ENCODE measurements at regions of chr9 and their contacts with region 1.

Region 1: DNA sequence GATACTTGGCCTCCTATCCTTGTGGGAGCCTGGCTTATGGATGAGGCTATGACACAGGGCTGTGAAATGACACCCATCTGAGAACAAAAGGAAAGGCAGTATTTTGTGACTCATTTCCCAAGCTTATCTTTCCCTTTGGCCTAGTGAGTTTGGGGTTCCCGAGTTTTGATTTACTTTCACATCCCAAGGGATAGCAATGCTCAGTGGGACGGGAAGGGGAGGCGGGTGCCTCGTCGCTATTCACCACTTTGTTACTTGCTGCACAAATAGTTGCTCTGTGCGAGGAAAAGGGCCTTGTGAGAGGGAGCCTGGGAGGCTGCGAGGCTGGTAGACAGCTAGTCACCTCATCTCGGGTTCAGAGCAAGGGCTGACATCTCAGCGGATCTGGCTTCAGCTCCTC is 59.1 kb upstream of the ENTREP1 start:
- DNase-seq: no peak
- ATAC-seq: no peak
- H3K4me3 ChIP-seq: no peak overlapping the region
- H3K27ac ChIP-seq: no peak overlapping the region
- H3K4me1 ChIP-seq: no peaks in the 10 kb centered on the region
- H3K27me3 ChIP-seq: no peaks in the 10 kb centered on the region; a peak in 1 of 4 replicates
- CTCF ChIP-seq: no peak
- EP300 ChIP-seq: no peak
- POLR2A ChIP-seq: no peak
- RAD21 ChIP-seq: no peak

Region 2: GRCh38 chr9:69215774-69216485 is 50.0 kb before region 1 on chr9:
- CTCF ChIA-PET with region 1: no interaction called
- POLR2A ChIA-PET with region 1: no interaction called
- RAD21 ChIA-PET with region 1: no interaction called
- SMC1A ChIA-PET with region 1: no interaction called
- in situ Hi-C with region 1: loop called (anchors 5 kb)
- intact Hi-C with region 1: no loop called
- DNase-seq: no peak
- ATAC-seq: no peak
- H3K4me3 ChIP-seq: no peak overlapping the region
- H3K27ac ChIP-seq: no peak overlapping the region
- H3K4me1 ChIP-seq: no peaks in the 10 kb centered on the region
- H3K27me3 ChIP-seq: no peaks in the 10 kb centered on the region
- CTCF ChIP-seq: no peak
- EP300 ChIP-seq: no peak
- POLR2A ChIP-seq: no peak
- RAD21 ChIP-seq: no peak

Region 3: DNA sequence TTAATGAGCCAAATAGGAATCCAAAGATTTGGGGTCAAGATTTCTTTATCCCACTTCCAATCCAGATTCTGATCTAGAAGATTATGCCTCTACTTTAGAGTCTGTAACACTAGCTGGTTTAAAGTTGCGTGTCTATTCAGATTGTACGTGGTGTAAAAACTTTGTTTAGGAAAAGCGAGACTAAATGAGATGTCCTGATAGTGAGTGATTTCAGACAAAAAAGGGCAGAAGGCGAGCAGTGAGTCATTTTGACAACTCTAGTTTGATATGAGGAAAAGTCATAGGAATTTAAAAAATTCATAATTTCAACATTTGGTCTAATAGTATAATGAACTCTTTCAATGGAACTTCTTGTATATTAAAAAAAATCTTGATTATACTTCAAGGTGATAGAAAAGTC is 1268.2 kb after region 1 on chr9:
- CTCF ChIA-PET with region 1: no interaction called
- POLR2A ChIA-PET with region 1: no interaction called
- RAD21 ChIA-PET with region 1: no interaction called
- SMC1A ChIA-PET with region 1: no interaction called
- in situ Hi-C with region 1: no loop called
- intact Hi-C with region 1: no loop called
- DNase-seq: no peak
- ATAC-seq: no peak
- H3K4me3 ChIP-seq: no peak overlapping the region
- H3K27ac ChIP-seq: no peak overlapping the region
- H3K4me1 ChIP-seq: no peaks in the 10 kb centered on the region
- H3K27me3 ChIP-seq: no peaks in the 10 kb centered on the region
- CTCF ChIP-seq: no peak
- EP300 ChIP-seq: no peak
- POLR2A ChIP-seq: no peak
- RAD21 ChIP-seq: no peak

Measured in GM12878 (cell line).